ENCODE measurements at regions of chr13 and their contacts with region 1.

Region 1: DNA sequence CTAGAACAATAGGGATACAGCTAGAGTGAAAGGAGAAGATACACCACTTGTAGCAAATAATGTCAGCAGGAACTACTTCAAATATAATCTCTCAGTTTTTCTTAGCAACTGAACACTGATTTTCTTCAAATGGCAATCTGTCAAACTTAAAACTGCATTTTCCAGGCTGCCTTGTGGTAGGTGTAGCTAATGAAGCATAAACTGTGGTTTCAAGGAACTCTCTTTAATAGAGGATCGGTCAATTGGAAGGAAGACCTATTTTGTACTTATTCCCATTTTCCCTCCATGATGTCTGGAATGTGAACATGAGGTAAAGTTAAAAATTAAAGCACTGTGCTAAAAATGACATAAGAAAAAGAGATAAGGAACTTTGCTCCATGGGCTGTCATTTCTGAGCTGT is 1261.9 kb downstream of the PCDH17 start:
- DNase-seq: no peak
- ATAC-seq: no peak
- H3K4me3 ChIP-seq: no peak overlapping the region
- H3K27ac ChIP-seq: no peak overlapping the region
- H3K4me1 ChIP-seq: no peaks in the 10 kb centered on the region
- H3K27me3 ChIP-seq: no peaks in the 10 kb centered on the region
- CTCF ChIP-seq: no peak
- EP300 ChIP-seq: no peak
- POLR2A ChIP-seq: no peak
- RAD21 ChIP-seq: no peak

Region 2: DNA sequence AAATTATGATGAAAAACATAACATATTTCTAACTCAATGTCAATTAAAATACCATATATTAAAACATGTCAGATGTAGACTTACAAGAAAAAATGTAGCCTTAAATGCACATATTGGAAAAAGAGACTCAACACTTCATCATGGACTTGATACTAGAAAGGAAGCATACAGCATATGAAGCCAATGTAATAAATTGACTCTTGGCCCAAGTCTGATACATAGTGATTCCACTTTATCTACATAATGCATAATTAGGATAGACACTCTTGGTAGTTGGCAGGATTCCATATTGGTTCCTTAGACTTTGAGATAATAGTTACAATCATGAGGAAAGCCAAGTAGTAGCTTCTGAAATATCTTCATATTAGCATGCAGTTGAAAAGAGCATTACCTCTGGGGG is 194.9 kb before region 1 on chr13:
- CTCF ChIA-PET with region 1: no interaction called
- POLR2A ChIA-PET with region 1: no interaction called
- RAD21 ChIA-PET with region 1: no interaction called
- SMC1A ChIA-PET with region 1: no interaction called
- in situ Hi-C with region 1: no loop called
- intact Hi-C with region 1: no loop called
- DNase-seq: no peak
- ATAC-seq: no peak
- H3K4me3 ChIP-seq: no peak overlapping the region
- H3K27ac ChIP-seq: no peak overlapping the region
- H3K4me1 ChIP-seq: no peaks in the 10 kb centered on the region
- H3K27me3 ChIP-seq: no peaks in the 10 kb centered on the region
- CTCF ChIP-seq: no peak
- EP300 ChIP-seq: no peak
- POLR2A ChIP-seq: no peak
- RAD21 ChIP-seq: no peak

Region 3: DNA sequence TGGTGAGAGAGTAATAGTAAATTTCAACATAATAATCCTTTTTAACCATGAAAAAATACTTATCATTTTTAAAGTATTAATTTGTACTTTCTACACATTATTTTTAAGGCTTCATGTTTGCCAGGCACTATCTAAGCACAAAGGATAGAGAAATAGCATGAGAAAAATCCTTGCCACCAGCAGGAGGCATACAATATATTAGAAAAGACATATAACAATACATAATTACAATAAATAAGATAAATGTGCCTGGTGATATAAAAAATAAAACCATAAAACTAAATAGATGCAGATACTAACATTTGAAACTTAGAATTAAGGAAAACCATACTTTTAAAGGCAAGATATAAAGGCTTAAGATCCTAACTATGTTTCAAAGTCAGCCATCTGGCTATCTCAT is 14.0 kb after region 1 on chr13:
- CTCF ChIA-PET with region 1: no interaction called
- POLR2A ChIA-PET with region 1: no interaction called
- RAD21 ChIA-PET with region 1: interaction called, 4 read pairs
- SMC1A ChIA-PET with region 1: interaction called, 17 read pairs
- in situ Hi-C with region 1: no loop called
- intact Hi-C with region 1: no loop called
- DNase-seq: no peak
- ATAC-seq: no peak
- H3K4me3 ChIP-seq: no peak overlapping the region
- H3K27ac ChIP-seq: no peak overlapping the region
- H3K4me1 ChIP-seq: no peaks in the 10 kb centered on the region
- H3K27me3 ChIP-seq: no peaks in the 10 kb centered on the region
- CTCF ChIP-seq: no peak
- EP300 ChIP-seq: no peak
- POLR2A ChIP-seq: no peak
- RAD21 ChIP-seq: no peak